Heart left ventricle (tissue), 16 donors: ENCODE measurements at regions of chrX and their contacts with region 1.

Region 1: GRCh38 chrX:131633285-131633917 is 89.5 kb downstream of the OR13H1 start:
- DNase-seq: peak in 3 of 5 donors; percentile 20 to 37 (median 22)
- ATAC-seq: peak in 3 of 4 donors; percentile 52 to 82 (median 77)
- H3K4me3 ChIP-seq: no peak overlapping the region
- H3K27ac ChIP-seq: no peak overlapping the region
- H3K4me1 ChIP-seq: no peaks in the 10 kb centered on the region
- H3K27me3 ChIP-seq: peaks cover 0 to 38% (median 0%) of the 10 kb centered on the region in 9 donors
- CTCF ChIP-seq: peak; percentile 53 to 85 (median 67)
- POLR2A ChIP-seq: no peak

Region 2: DNA sequence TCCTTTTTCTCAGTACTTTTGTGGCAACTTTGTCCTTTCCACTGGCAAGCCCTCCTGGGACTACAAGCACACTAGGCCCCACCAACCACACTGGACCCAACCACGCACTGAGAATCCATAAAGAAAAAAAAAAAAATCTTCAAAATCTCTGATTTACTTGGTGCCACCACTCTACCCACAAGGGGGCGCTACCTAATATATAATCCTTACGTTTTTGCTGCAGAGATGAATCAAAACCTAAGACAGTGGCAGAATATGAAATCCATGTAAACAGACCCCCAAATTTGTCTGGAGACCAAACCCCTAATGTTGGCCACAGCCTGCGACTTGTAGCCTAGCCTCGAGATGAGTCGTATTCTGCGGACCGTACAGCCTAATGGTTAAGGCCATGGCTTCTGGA is 638.7 kb before region 1 on chrX:
- intact Hi-C with region 1: loop called in 1 of 10 experiments (anchors 10 kb)
- DNase-seq: no peak
- ATAC-seq: no peak
- H3K4me3 ChIP-seq: no peak overlapping the region
- H3K27ac ChIP-seq: no peak overlapping the region
- H3K4me1 ChIP-seq: no peaks in the 10 kb centered on the region
- H3K27me3 ChIP-seq: peaks cover 0 to 48% (median 0%) of the 10 kb centered on the region in 9 donors
- CTCF ChIP-seq: peak in 11 of 12 donors; percentile 6 to 56 (median 31)
- POLR2A ChIP-seq: no peak

Region 3: GRCh38 chrX:131045754-131046153 is 587.6 kb before region 1 on chrX:
- intact Hi-C with region 1: no loop called
- DNase-seq: no peak
- ATAC-seq: no peak
- H3K4me3 ChIP-seq: no peak overlapping the region
- H3K27ac ChIP-seq: no peak overlapping the region
- H3K4me1 ChIP-seq: no peaks in the 10 kb centered on the region
- H3K27me3 ChIP-seq: peaks cover 0 to 42% (median 0%) of the 10 kb centered on the region in 9 donors
- CTCF ChIP-seq: no peak
- POLR2A ChIP-seq: no peak